Vagina (tissue), 2 donors: ENCODE measurements at regions of chr7 and their contacts with region 1.

Region 1: GRCh38 chr7:150507947-150508602 is 6.6 kb upstream of the GIMAP7 start:
- DNase-seq: no peak
- H3K4me3 ChIP-seq: no peak overlapping the region
- H3K27ac ChIP-seq: no peak overlapping the region
- H3K4me1 ChIP-seq: no peaks in the 10 kb centered on the region
- H3K27me3 ChIP-seq: no peaks in the 10 kb centered on the region
- CTCF ChIP-seq: no peak
- POLR2A ChIP-seq: no peak

Region 2: DNA sequence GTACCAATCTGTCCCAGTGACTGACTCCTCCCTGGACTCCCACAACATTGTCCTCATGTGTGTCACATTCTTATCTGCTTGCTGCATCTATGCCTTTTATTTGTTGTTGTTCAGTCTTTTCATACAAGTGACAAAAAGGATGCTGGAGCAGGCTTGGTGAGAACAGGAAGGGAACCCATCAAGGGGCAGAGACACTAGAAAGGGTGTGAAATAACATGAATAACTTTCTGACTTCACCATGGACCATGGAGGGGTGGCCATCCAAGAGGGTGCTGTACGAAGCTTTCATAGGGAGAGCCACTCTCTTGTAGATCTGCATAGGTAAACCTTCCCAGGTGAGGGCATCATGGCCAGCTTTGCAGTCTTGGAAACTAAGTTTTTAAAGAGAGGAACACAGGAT is 43.1 kb before region 1 on chr7:
- intact Hi-C with region 1: loop called (anchors 1 kb)
- DNase-seq: no peak
- H3K4me3 ChIP-seq: no peak overlapping the region
- H3K27ac ChIP-seq: no peak overlapping the region
- H3K4me1 ChIP-seq: no peaks in the 10 kb centered on the region
- H3K27me3 ChIP-seq: no peaks in the 10 kb centered on the region
- CTCF ChIP-seq: no peak
- POLR2A ChIP-seq: no peak

Region 3: GRCh38 chr7:150556521-150557138 is 48.6 kb after region 1 on chr7:
- intact Hi-C with region 1: no loop called
- DNase-seq: no peak
- H3K4me3 ChIP-seq: no peak overlapping the region
- H3K27ac ChIP-seq: no peak overlapping the region
- H3K4me1 ChIP-seq: no peaks in the 10 kb centered on the region
- H3K27me3 ChIP-seq: no peaks in the 10 kb centered on the region
- CTCF ChIP-seq: no peak
- POLR2A ChIP-seq: no peak